ENCODE measurements at regions of chr20 and their contacts with region 1.

Region 1: GRCh38 chr20:21315138-21315537 is 12.0 kb downstream of the XRN2 start:
- DNase-seq: peak; percentile 61
- ATAC-seq: peak; percentile 86
- H3K4me3 Mint-ChIP-seq: no peak overlapping the region
- H3K27ac Mint-ChIP-seq: peak overlapping the region; percentile 23
- H3K4me1 Mint-ChIP-seq: peaks cover 81% of the 10 kb centered on the region
- H3K27me3 Mint-ChIP-seq: no peaks in the 10 kb centered on the region

Region 2: DNA sequence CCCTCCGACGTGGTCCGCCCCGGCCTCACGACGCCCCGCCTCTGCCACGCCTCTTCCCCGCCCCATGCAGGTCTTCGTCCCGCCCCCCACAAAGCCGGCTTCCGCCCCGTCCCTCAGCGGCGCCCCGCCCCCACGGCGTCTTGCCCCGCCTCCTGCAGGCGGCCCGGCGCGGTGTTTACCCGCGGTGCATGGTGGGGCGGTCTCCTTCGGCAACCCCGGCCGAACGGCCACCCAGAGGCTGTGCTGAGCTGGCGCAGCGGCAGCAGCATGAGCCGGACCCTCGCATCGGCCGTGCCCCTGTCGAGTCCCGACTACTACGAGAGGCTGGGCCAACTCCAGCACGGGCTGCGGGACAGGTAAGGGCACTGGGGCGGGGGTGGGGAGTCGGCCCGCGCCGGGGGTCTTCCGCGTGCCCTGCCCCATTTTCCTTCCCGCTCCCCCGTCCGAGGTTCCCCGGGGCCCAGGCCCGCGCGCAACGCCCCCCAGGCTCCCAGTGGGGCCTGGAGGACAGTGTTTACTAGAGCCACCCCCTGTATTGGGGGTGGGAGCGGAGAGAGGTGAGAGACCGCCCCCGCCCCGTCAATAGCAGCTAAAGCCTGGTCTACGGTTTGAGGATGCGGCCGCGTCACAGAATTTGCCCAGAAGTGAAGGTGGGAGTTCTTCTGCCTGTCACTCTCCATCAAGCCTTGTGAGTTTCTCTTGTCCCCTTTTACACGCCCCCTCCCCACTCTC is 189.1 kb before region 1 on chr20 and contains the start of gene KIZ:
- CTCF ChIA-PET with region 1: no interaction called
- POLR2A ChIA-PET with region 1: no interaction called
- intact Hi-C with region 1: loop called in 1 of 2 experiments (anchors 5 kb)
- DNase-seq: peak; percentile 99
- ATAC-seq: peak; percentile 97
- H3K4me3 Mint-ChIP-seq: peak within 1 kb of the TSS; percentile 95
- H3K27ac Mint-ChIP-seq: peak within 1 kb of the TSS; percentile 86
- H3K4me1 Mint-ChIP-seq: peaks cover 18% of the 10 kb centered on the region
- H3K27me3 Mint-ChIP-seq: no peaks in the 10 kb centered on the region
- total RNA-seq, gene KIZ: 13.2 to 15.2 TPM

Region 3: GRCh38 chr20:21288587-21289370 is 26.4 kb before region 1 on chr20:
- CTCF ChIA-PET with region 1: no interaction called
- POLR2A ChIA-PET with region 1: interaction called, 13 read pairs
- intact Hi-C with region 1: no loop called
- DNase-seq: no peak
- ATAC-seq: no peak
- H3K4me3 Mint-ChIP-seq: no peak overlapping the region
- H3K27ac Mint-ChIP-seq: no peak overlapping the region
- H3K4me1 Mint-ChIP-seq: no peaks in the 10 kb centered on the region
- H3K27me3 Mint-ChIP-seq: peaks cover 23% of the 10 kb centered on the region